ENCODE measurements at regions of chr4 and their contacts with region 1.

Region 1: DNA sequence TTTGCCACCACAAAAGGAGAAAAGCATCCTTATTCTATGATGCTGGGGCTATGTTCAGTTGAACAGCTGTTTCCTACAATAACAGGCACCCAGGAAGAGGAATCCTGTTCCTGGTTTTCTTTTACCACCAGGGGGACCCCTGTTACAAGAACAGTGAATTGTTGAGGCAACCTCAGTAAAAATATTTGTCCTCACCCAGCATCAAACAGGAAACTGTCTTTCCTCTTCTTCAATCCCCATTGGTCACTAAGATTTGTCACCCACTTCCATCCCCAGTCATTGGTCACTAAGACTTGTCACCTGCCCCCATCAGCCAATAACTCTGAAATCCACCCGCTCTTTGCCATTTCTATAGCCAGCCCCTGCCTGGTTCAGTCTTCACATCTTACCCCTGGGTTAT is 143.5 kb upstream of the GALNT7 start:
- DNase-seq: peak; percentile 54
- CTCF ChIP-seq: peak; percentile 53

Region 2: DNA sequence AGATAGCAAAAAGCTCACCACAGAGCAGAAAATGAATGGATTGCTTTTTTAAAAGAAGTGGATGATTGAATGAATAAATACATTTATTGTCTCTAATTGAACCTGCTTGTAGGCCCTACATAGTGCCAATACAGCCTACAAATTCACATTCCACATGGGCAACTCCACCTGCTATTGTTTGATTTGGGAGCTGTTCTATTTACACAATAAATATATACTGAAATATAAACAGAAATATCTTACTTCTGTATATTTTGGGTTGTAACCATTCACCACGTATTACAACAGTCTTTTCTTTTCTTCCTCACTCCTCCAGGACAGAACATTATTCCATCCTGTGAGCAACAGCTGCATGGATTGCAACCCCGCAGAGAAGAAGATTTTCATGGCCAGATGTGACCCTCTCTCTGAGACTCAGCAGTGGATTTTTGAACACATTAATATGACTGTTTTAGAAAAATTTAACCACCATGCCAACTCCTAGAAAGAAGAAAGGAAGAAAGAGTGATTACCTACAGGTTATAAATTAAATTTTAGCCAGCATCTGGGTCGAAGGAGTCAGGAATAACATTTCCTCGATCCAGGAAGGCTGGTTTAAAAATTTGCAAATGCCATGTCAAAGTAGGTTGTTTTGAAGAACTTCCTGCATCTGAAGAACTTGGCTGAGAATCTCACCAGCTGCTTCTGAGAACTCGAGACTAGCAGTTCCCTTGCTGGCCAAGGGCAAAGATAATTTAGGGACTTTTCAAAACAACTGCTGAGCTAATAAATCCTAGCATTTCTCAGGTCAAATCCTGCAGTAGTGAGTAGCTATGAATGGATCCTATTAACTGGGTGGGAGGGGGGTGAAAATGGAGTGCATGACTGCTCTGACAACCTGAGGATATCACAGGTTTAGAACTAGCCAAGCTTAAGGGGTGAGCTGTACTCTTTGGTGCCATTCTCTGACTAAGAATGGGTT is 14.8 kb after region 1 on chr4:
- CTCF ChIA-PET with region 1: interaction called, 23 read pairs
- POLR2A ChIA-PET with region 1: no interaction called
- DNase-seq: no peak
- CTCF ChIP-seq: no peak

Region 3: DNA sequence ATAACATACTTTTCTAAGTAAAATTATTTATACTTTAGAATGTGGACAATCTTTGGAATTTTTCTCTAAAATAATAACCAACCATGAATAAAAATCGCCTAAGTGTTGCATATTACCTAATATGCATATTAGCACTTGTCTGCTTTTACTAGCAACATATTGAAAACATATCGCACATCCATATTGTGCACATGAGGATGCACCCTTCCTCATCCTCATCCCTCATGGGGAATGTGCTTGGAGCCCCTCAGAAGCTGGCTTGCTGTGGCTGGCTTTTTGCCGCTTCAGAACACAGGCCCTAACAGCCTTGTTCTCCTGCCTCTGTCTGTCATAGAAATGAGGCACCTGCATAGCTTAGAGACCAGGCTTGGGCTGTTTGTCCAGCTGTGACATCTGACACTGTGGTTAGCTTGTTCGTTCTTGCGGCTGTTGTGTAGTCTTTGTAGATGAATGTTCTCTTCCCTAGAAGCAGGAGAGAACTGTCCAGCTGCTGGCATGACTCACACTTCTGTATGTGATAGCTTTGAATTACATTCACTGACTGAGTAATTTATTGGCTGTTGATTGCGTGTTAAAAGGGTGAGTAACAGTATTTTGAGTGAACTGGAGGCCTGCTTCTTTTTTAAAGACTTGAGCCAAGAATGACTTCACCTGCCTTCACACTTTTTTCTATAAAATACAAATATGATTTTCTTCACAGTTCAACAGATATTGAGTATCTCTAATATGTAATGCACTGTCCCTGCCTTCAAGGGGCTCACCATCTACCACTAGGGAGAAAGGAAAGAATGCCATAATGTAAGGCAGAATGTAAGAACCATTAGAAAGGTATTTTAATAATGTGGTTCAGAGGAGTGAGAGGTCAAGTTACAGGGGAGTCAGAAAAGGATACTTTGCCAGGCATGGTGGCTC is 227.1 kb after region 1 on chr4:
- CTCF ChIA-PET with region 1: interaction called, 125 read pairs
- POLR2A ChIA-PET with region 1: no interaction called
- DNase-seq: peak; percentile 30
- CTCF ChIP-seq: no peak